ENCODE measurements at regions of chr6 and their contacts with region 1.

Region 1: GRCh38 chr6:33014841-33015634 is 5.6 kb upstream of the HLA-DOA start:
- DNase-seq: peak; percentile 70
- CTCF ChIP-seq: peak; percentile 65

Region 2: DNA sequence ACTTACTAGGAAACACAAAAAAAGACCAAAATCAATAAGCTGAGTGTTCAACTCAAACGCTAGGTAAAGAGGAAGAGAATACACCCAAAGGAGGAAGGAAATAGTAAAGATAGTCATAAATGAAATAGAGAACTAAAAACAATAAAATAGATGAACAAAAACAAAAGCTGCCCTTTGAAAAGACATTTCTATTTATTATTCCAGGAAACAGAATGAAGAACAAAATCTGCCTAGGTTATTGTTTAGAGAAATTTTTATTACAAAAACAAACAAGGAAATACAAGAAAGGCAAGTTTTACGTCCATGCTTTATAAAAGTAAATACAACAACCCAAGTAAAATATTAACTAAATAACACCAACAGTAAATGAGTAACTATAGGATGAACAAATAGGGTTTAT is 94.3 kb before region 1 on chr6:
- CTCF ChIA-PET with region 1: no interaction called
- POLR2A ChIA-PET with region 1: no interaction called
- DNase-seq: no peak
- CTCF ChIP-seq: no peak

Region 3: DNA sequence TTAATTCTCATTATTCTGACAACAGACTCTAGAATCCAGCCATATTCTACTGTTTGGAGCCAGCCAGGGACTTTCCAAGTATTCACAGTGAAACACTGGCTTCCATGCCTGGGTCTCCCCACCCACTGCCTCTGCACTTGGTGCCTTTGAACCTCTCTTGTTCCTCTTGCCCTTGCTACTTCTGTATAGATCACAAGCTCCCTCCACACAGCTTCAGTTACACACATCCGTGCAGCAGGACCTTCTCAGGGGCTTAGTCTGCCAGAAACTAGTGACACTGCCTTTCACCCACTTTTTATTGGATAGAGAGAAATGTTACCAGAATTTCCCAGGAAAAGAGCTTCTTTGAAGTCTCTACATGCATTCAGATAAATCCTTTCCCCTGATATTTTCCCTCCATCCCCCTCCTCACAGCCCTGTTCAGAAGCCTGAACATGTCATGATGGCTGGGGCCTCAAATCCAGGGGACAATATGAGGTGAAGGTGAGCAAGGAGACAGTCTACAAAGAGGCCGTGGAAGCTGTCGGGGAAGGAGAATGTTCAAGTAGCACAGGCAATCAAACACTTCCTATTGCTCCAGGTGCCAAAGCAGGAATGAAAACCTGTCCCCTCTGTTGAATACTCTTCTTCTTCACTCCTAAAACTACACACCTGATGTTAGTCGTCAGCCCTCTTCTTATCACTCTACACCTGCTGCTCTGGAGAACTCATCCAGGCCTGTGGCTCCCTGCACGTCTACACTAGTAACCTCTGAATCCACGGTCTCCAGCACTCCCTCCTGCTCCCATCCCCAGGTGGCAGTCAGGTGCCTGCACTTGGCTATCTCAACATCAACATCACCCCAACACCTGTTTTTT is 14.5 kb after region 1 on chr6:
- CTCF ChIA-PET with region 1: interaction called, 75 read pairs
- POLR2A ChIA-PET with region 1: interaction called, 4 read pairs
- DNase-seq: peak; percentile 64
- CTCF ChIP-seq: peak; percentile 19

Region 4: GRCh38 chr6:33075568-33076405 is 60.7 kb after region 1 on chr6 and contains the start of gene HLA-DPB1:
- CTCF ChIA-PET with region 1: interaction called, 78 read pairs
- POLR2A ChIA-PET with region 1: interaction called, 4 read pairs
- DNase-seq: peak; percentile 86
- CTCF ChIP-seq: no peak

Region 5: GRCh38 chr6:33088931-33089620 is 74.0 kb after region 1 on chr6:
- CTCF ChIA-PET with region 1: interaction called, 78 read pairs
- POLR2A ChIA-PET with region 1: no interaction called
- DNase-seq: no peak
- CTCF ChIP-seq: no peak

Region 6: DNA sequence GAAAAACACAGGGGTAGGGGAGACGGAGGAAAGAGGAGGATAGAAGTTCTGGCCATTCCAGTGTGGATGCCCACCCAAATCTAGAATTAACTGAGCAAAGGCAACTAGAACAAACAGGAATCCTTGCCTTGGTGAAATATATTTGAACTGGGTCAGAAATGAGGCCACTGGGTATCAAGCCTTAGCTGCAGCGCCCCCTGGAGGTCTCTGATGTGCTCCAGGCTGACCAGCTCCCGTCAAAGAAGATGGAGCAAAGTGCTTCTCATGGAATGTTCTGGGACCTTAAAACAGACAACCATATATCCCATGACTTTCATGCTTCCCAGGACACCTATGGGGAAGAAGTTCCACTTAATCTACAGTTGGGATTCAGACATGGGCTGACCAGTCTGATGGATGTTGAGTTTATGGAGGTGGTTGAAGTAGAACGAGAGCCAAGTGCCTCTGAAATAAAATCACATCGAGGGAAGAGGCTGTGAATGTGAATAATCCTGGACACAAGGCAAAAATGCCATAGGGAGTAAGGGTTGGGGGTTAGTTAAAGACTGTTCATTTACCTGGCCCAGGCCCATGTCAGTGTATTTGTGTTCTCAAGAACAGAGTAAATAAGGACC is 111.2 kb after region 1 on chr6:
- CTCF ChIA-PET with region 1: interaction called, 23 read pairs
- POLR2A ChIA-PET with region 1: no interaction called
- DNase-seq: peak; percentile 64
- CTCF ChIP-seq: peak; percentile 58